Activated CD8-positive, alpha-beta memory T cell treated with anti-CD3 and anti-CD28 coated beads, Interleukin-2, amount 10 ng/mL, durations not matched to agents 7 days and 5 days (primary cell): ENCODE measurements at regions of chr17 and their contacts with region 1.

Region 1: DNA sequence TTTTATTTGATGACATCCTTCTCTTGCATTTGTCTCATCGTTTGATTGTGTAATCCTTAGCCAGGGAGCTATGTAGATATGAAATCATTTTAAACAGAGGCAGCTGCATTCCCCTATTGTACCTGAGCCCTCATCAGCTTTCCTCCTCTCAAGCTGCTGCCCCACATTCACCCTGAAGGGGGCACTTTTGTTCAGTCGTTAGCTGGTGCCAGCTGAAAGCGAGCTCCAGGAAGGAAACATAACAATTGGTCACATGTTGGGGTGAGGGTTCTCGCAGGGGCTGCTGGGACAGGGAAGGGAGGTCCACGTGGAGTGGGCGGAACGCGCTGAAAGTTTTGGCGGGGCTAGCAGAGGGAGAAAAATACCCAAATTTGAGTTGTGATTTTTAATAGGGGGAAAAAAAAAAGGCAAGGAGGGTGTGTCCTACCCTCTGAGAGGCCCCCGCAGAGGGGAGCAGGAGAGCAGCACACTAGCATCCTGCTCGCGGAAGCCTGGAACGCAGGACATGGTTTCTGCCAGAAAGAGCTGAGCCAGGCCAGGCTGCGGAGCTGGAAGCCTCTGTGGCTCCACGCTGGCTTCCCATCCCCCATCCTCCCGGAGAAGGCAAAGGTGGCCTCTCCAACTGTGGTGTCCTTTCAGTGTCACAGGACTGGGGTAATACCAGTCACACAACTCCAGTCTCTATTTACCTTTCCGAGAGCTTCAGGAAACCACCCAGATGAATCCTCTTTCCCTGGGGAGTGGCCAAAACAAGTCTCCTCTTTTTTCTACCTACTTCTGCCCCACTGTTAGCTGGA is 8.5 kb upstream of the MSL1 start:
- DNase-seq: peak; percentile 97
- ATAC-seq: peak; percentile 91
- H3K4me3 Mint-ChIP-seq: peak overlapping the region; percentile 81
- H3K27ac Mint-ChIP-seq: peak overlapping the region; percentile 81
- H3K4me1 Mint-ChIP-seq: peaks cover 44% of the 10 kb centered on the region
- H3K27me3 Mint-ChIP-seq: no peaks in the 10 kb centered on the region

Region 2: DNA sequence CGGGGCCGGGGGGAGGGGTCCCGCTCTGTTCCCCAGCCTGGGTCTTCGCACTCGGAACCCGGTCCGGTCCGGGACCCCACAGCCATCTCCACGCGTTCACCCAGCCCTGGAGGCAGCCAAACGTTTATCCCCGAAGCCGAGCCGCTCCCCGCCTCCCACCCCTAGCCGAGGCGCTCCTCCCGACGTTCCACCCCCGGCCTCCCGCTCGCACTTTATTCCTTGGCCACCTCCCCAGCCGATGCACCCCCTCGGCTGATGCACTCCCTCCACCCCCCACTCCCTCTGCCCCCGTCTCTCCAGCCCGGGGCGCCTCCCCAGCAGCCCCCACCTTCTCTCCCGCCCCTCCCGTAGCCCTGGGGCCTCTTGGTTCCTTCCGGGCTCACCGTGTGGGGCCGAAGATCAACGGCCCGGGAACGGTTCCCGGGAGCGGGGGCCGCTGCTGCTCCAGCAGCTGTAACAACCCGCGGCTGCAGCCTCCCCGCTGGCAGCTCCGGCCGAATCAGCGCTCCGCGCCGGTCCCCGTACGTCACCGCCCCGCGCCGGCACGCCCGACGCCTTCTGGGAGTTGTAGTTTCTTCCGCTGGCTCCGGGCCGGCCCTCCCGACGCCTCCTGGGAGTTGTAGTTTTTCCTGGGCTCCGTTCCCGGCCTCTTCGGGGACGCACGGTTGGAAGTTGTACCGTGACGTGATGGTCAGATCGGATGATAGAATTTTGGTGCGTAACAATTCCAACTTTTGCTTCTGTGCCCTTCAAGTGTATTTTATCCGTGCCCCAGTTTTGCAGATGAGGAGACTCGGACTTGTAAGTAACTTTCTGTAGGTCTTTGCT is 186.0 kb before region 1 on chr17 and contains the starts of genes LRRC3C and ORMDL3:
- CTCF ChIA-PET with region 1: no interaction called
- DNase-seq: peak; percentile 95
- ATAC-seq: peak; percentile 86
- H3K4me3 Mint-ChIP-seq: peak within 1 kb of the TSS; percentile 88
- H3K27ac Mint-ChIP-seq: peak within 1 kb of the TSS; percentile 98
- H3K4me1 Mint-ChIP-seq: peaks cover 60% of the 10 kb centered on the region
- H3K27me3 Mint-ChIP-seq: no peaks in the 10 kb centered on the region
- total RNA-seq, gene LRRC3C: not detected
- total RNA-seq, gene ORMDL3: 111 to 131 TPM

Region 3: DNA sequence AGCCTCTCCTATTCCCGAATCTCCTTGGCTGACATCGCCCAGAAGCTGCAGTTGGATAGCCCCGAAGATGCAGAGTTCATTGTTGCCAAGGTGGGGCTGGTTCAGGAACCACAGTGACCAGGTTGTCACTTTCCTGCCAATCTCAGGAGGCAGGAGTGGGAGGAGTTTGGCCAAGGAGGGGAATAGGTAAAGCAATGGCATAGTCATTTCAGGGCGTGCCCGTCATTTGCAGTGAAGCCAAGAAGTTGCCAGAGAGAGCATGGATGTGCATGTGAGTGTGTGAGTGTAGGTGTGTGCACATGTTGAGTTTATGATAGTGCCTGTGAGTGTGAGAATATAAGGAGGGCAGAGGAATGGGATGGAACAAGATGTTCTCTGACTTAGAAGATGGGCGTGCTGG is 117.9 kb before region 1 on chr17:
- CTCF ChIA-PET with region 1: no interaction called
- DNase-seq: no peak
- ATAC-seq: no peak
- H3K4me3 Mint-ChIP-seq: no peak overlapping the region
- H3K27ac Mint-ChIP-seq: no peak overlapping the region
- H3K4me1 Mint-ChIP-seq: no peaks in the 10 kb centered on the region
- H3K27me3 Mint-ChIP-seq: no peaks in the 10 kb centered on the region

Region 4: DNA sequence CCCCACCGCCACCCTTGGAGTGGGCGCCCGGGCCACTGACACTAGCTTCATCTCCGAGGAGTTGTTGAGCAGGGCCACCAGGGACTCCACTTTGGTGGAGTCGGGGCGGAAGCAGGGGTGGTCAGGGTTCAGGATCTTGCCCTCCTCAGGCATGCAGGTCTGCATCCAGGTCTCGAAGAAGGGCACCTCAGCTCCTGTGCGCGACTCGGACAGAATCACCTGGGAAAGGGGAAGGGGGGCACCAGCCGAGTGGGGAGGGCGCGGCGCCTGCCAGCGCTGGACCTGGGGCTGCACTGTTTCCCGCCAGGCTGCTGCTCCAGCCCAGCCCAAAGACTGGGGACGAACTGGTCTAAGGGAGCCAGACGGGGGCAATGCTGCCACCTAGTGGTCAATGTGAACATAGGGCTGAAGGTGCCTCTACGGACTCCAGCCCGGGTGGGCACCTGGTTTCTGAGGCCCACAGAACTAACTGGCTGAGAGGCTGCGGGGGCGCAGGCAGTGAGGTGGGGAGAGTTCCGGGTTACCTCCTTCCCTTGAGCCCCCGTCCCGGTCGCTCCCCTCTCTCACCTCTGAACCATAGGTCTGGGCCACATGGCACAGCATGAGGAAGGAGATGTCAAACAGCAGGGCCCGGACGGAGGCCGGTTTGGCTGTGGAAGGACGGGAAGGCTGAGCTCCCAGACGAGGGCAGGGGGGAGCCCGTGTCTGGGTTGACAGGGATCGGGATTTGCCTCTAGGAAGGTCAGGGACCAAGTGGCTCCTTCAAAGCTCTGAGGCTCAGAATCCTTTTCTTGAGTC is 86.3 kb before region 1 on chr17:
- CTCF ChIA-PET with region 1: interaction called, 29 read pairs
- DNase-seq: peak; percentile 85
- ATAC-seq: peak; percentile 95
- H3K4me3 Mint-ChIP-seq: no peak overlapping the region
- H3K27ac Mint-ChIP-seq: no peak overlapping the region
- H3K4me1 Mint-ChIP-seq: peaks cover 23% of the 10 kb centered on the region
- H3K27me3 Mint-ChIP-seq: no peaks in the 10 kb centered on the region

Region 5: GRCh38 chr17:40086150-40087044 is 26.9 kb before region 1 on chr17:
- CTCF ChIA-PET with region 1: interaction called, 32 read pairs
- DNase-seq: peak; percentile 66
- ATAC-seq: peak; percentile 63
- H3K4me3 Mint-ChIP-seq: no peak overlapping the region
- H3K27ac Mint-ChIP-seq: no peak overlapping the region
- H3K4me1 Mint-ChIP-seq: no peaks in the 10 kb centered on the region
- H3K27me3 Mint-ChIP-seq: no peaks in the 10 kb centered on the region

Region 6: DNA sequence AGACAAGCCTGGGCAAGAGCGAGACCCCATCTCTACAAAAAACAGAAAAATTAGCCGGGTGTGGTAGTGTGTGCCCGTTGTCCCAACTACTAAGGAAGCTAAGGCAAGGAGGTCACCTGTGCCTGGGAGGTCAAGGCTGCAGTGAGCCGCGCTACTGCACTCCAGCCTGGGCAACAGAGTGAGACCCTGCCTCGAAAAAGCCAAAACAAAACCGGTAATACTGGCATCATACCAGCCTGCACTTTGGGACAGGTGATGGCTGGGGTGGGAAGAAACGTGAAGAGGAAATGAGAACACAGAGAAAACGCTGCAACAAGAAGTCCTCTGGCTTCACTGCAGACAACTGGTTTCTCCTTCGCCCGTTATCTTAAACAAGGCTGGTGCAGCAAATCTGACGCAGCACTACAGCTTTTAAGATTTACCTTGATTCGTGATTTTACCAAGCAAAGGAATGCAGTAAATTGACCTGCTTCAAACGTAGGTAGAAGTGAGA is 26.3 kb after region 1 on chr17:
- CTCF ChIA-PET with region 1: interaction called, 32 read pairs
- DNase-seq: no peak
- ATAC-seq: peak; percentile 1
- H3K4me3 Mint-ChIP-seq: peak overlapping the region; percentile 88
- H3K27ac Mint-ChIP-seq: peak overlapping the region; percentile 90
- H3K4me1 Mint-ChIP-seq: peaks cover 29% of the 10 kb centered on the region
- H3K27me3 Mint-ChIP-seq: no peaks in the 10 kb centered on the region

Region 7: DNA sequence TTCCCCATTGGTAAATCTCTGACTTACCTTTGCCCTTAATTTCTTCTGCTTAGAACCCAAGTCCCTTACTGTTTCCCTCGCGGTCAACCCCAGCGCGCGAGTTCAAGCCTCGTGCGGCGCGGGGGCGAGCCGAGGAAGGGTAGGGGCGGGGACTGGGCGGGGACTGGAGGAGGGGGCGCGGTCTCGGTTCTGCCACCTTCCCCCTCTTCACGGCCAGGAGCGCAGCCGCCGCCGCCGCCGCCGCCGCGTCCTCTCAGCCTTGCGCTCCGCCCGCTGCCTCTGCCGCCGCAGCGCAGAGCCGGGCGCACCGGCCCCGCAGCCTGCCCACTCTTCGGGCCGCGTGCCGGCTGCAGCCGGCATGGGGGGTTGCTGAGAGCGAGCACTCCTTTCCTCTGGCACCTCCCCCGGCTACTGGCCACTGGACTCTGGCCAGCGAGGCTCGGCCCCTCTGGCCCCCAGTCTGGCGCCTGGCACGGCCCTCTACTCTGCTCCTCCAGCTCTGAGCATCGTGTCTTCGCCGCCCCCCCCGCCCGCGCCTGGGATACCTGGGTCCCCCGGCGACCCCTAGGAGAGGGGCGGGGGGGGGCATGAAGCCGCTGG is 64.1 kb after region 1 on chr17 and contains the start of gene RAPGEFL1:
- CTCF ChIA-PET with region 1: interaction called, 13 read pairs
- DNase-seq: peak; percentile 87
- ATAC-seq: peak; percentile 96
- H3K4me3 Mint-ChIP-seq: no peak within 1 kb of the TSS
- H3K27ac Mint-ChIP-seq: peak within 1 kb of the TSS; percentile 43
- H3K4me1 Mint-ChIP-seq: peaks cover 7% of the 10 kb centered on the region
- H3K27me3 Mint-ChIP-seq: no peaks in the 10 kb centered on the region
- total RNA-seq, gene RAPGEFL1: 4.4 to 4.6 TPM